Heart left ventricle (tissue), 16 donors: ENCODE measurements at regions of chr15 and their contacts with region 1.

Region 1: DNA sequence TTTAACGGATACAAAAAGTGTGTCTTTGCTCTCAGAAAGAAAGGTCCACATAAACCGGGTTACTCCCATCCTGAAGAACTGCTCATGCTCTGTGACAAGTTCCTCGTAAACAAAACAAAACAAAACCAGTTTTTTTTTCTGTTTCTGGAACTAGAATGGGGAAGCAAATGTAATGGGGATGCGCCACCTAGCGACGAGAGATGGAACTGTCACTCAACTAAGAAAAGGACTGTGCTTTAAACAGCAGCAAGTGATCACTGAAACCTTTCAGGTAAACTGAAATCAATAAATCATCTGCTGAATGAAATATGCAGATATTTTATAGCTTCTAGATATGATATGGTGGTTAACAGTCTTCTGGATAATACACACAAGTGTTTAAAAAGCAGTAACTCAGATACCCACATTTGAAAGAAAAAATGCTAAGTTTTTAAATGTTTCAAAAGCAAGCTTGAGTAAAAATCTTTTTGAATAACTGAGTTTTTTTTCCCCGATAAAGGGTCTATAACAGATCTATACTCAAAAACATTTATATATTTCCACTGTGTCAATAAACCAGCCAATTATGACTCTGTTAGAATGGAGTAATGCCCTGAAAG is 10.9 kb downstream of the TM2D3 start:
- DNase-seq: peak in 4 of 5 donors; percentile 49 to 74 (median 61)
- ATAC-seq: peak; percentile 49 to 68 (median 58)
- H3K4me3 ChIP-seq: peak overlapping the region in 4 of 12 donors; percentile 1 to 13 (median 8)
- H3K27ac ChIP-seq: peak overlapping the region in 11 of 12 donors; percentile 3 to 76 (median 38)
- H3K4me1 ChIP-seq: peaks cover 2 to 28% (median 18%) of the 10 kb centered on the region in 12 donors
- H3K27me3 ChIP-seq: no peaks in the 10 kb centered on the region
- CTCF ChIP-seq: peak; percentile 91 to 98 (median 96)
- POLR2A ChIP-seq: no peak

Region 2: GRCh38 chr15:101294731-101295606 is 346.3 kb before region 1 on chr15 and contains the start of gene SNRPA1:
- intact Hi-C with region 1: loop called (anchors 2 to 5 kb)
- DNase-seq: peak; percentile 98 to 100 (median 99)
- ATAC-seq: peak; percentile 76 to 96 (median 92)
- H3K4me3 ChIP-seq: peak within 1 kb of the TSS; percentile 73 to 99 (median 93)
- H3K27ac ChIP-seq: peak within 1 kb of the TSS; percentile 85 to 98 (median 96)
- H3K4me1 ChIP-seq: peaks cover 4 to 36% (median 27%) of the 10 kb centered on the region in 12 donors
- H3K27me3 ChIP-seq: no peaks in the 10 kb centered on the region
- CTCF ChIP-seq: no peak
- POLR2A ChIP-seq: peak; percentile 29 to 76
- total RNA-seq, gene SNRPA1: 17.6 to 44.3 (median 28.6) TPM

Region 3: DNA sequence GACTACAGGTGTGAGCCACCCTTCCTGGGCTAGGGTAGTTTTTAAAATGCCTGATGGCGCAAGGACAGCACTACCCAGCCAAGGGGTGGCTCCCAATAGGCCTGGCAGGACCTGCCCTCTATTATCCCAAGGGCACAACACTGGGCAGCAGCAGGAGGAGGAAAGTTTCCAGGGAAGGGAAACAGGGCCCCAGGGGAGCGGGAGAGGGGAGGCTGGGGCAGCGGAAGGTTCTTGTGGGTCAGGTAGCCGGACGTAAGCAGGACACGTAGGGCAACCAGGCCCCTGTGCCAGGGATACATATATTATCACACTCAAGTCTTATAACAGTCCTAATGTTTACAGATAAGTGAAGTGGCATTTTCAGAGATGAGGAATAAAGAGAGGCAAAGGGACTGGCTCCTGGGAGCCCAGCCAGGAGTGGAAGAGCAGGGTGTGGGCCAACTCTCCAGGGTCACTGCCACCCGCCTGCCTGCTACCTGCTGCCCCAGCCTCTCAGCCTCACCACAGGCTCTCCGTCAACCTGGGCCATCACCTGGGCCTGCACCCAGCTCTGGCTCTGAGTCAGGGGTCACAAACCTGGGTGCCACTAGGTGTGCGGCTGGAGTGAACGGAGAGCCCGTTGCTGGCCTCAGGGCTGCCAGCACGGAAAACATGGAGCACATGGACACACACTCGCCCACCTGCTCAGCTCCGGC is 273.0 kb before region 1 on chr15:
- intact Hi-C with region 1: loop called in 2 of 10 experiments (anchors 5 to 10 kb)
- DNase-seq: peak in 4 of 5 donors; percentile 55 to 87 (median 77)
- ATAC-seq: peak; percentile 89 to 91 (median 90)
- H3K4me3 ChIP-seq: peak overlapping the region in 5 of 12 donors; percentile 7 to 34 (median 21)
- H3K27ac ChIP-seq: peak overlapping the region; percentile 27 to 94 (median 76)
- H3K4me1 ChIP-seq: peaks cover 0 to 22% (median 8%) of the 10 kb centered on the region in 12 donors
- H3K27me3 ChIP-seq: no peaks in the 10 kb centered on the region
- CTCF ChIP-seq: no peak
- POLR2A ChIP-seq: no peak

Region 4: DNA sequence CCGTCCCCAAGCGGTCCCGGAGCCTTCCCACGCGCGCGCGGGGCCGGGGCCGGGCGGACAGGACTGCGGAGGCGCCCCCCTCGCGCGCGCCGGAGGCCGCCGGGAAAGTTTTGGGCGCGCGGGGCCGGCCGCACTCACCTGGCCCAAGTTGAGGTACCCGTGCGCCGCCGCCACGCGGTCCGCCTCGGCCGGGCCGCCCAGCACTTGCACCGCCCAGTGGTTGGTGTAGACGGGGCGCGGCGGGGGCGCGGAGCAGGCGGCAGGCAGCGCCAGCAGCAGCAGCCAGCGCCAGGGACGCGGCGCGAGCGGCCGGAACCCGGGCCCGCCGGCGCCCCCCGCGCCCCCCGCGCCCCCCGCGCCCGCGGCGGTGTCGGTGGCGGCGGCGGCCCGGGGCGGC is 152.0 kb before region 1 on chr15:
- intact Hi-C with region 1: loop called in 2 of 10 experiments (anchors 5 to 10 kb)
- DNase-seq: peak in 3 of 5 donors; percentile 59 to 75 (median 69)
- ATAC-seq: peak in 3 of 4 donors; percentile 53 to 58 (median 56)
- H3K4me3 ChIP-seq: peak overlapping the region in 8 of 12 donors; percentile 40 to 67 (median 53)
- H3K27ac ChIP-seq: peak overlapping the region in 2 of 12 donors; percentile 9 to 47
- H3K4me1 ChIP-seq: peaks cover 0 to 20% (median 3%) of the 10 kb centered on the region in 12 donors
- H3K27me3 ChIP-seq: peaks cover 0 to 39% (median 0%) of the 10 kb centered on the region in 9 donors
- CTCF ChIP-seq: peak in 2 of 12 donors; percentile 12 to 16
- POLR2A ChIP-seq: no peak

Region 5: DNA sequence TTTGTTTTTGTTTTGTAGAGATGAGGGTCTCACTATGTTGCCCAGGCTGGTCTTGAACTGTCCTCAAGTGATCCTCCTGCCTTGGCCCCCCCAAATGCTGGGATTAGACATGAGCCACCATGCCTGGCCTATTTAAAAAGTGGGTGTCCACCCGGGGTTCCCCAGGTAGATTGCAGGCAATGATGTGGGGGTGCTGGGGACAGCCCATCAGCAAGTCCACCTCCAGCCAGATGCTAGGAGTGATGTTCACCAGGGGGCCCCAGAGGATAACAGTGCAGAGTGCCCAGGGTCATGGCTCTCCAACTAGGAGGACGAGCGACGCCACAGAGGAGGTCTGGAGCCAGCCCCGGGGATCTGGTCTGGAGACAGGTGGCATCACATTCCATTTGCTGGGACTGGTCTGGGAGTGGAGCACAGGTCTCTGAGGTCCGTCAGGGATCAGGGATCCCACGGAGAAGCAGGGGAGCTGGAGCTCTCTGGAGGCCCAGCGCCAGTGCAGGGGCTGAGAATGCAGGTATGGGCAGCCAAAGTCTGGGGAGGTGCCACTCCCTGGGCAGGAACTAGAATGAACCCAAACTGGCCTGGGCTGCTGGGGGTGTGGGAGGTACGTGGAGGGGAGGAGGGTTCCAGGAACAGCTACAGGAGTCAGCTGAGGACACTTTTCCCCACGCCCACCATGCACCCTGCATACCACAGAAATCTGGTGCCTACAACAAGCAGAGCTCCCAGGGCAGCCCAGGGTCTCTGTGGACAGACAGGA is 100.6 kb before region 1 on chr15:
- intact Hi-C with region 1: loop called in 1 of 10 experiments (anchors 1 kb)
- DNase-seq: peak in 1 of 5 donors; percentile 50
- ATAC-seq: peak in 3 of 4 donors; percentile 22 to 70 (median 36)
- H3K4me3 ChIP-seq: no peak overlapping the region
- H3K27ac ChIP-seq: no peak overlapping the region
- H3K4me1 ChIP-seq: peaks cover 0 to 9% (median 0%) of the 10 kb centered on the region in 12 donors
- H3K27me3 ChIP-seq: peaks cover 0 to 5% (median 0%) of the 10 kb centered on the region in 9 donors
- CTCF ChIP-seq: peak in 8 of 12 donors; percentile 10 to 42 (median 16)
- POLR2A ChIP-seq: no peak

Region 6: GRCh38 chr15:101723874-101724674 is 82.8 kb after region 1 on chr15 and contains the start of gene TARS3:
- intact Hi-C with region 1: loop called in 1 of 10 experiments (anchors 10 kb)
- DNase-seq: peak; percentile 96 to 97 (median 97)
- ATAC-seq: peak; percentile 98 to 99 (median 99)
- H3K4me3 ChIP-seq: peak within 1 kb of the TSS; percentile 71 to 98 (median 83)
- H3K27ac ChIP-seq: peak within 1 kb of the TSS; percentile 62 to 94 (median 88)
- H3K4me1 ChIP-seq: peaks cover 0 to 16% (median 5%) of the 10 kb centered on the region in 12 donors
- H3K27me3 ChIP-seq: no peaks in the 10 kb centered on the region
- CTCF ChIP-seq: peak in 4 of 12 donors; percentile 12 to 30 (median 20)
- POLR2A ChIP-seq: peak; percentile 84 to 97
- total RNA-seq, gene TARS3: 19.4 to 44.3 (median 38.0) TPM